ENCODE measurements at regions of chr7 and their contacts with region 1.

Region 1: GRCh38 chr7:143008007-143008901 is 18.7 kb downstream of the OR9A2 start:
- DNase-seq: peak; percentile 57 to 85 (median 75)
- ATAC-seq: peak; percentile 98
- H3K4me3 ChIP-seq: no peak overlapping the region
- H3K4me3 Mint-ChIP-seq: no peak overlapping the region
- H3K27ac ChIP-seq: no peak overlapping the region
- H3K27ac Mint-ChIP-seq: peak overlapping the region in 1 of 9 donors; percentile 56
- H3K4me1 ChIP-seq: no peaks in the 10 kb centered on the region
- H3K4me1 Mint-ChIP-seq: peaks cover 3 to 8% (median 5%) of the 10 kb centered on the region in 7 donors
- H3K27me3 ChIP-seq: no peaks in the 10 kb centered on the region
- H3K27me3 Mint-ChIP-seq: peaks cover 0 to 24% (median 4%) of the 10 kb centered on the region in 5 donors

Region 2: DNA sequence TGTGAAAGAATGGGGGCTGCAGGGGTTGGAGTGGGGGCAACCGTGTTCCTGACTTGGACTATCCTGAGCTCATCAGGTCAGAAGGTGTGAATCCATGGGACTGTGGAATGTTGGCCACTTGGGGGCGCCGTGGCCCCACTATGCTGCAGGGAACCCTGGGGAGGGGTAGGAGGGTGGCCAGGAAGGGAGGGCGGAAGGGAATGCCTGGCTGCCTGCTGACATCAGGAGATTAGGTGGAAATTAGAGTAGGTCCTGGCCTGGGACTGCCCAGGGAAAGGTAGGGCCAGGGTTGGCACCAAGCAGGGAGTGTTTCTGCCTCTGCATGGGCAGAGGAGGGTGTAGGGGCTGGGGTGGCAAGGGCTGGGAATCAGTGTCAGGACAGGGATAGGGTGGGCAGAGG is 684.5 kb before region 1 on chr7:
- CTCF ChIA-PET with region 1: interaction called, 3 read pairs
- POLR2A ChIA-PET with region 1: no interaction called
- intact Hi-C with region 1: loop called in 1 of 2 experiments (anchors 1 kb)
- DNase-seq: peak in 5 of 9 donors; percentile 25 to 44 (median 41)
- ATAC-seq: peak; percentile 40
- H3K4me3 ChIP-seq: no peak overlapping the region
- H3K4me3 Mint-ChIP-seq: peak overlapping the region in 7 of 10 donors; percentile 4 to 65 (median 54)
- H3K27ac ChIP-seq: peak overlapping the region; percentile 34
- H3K27ac Mint-ChIP-seq: peak overlapping the region; percentile 17 to 96 (median 80)
- H3K4me1 ChIP-seq: peaks cover 0 to 24% of the 10 kb centered on the region in 2 donors
- H3K4me1 Mint-ChIP-seq: peaks cover 5 to 51% (median 34%) of the 10 kb centered on the region in 7 donors
- H3K27me3 ChIP-seq: no peaks in the 10 kb centered on the region
- H3K27me3 Mint-ChIP-seq: peaks cover 0 to 23% (median 4%) of the 10 kb centered on the region in 5 donors

Region 3: GRCh38 chr7:142412551-142413193 is 595.6 kb before region 1 on chr7:
- CTCF ChIA-PET with region 1: no interaction called
- POLR2A ChIA-PET with region 1: no interaction called
- intact Hi-C with region 1: loop called in 1 of 2 experiments (anchors 10 kb)
- DNase-seq: peak in 8 of 9 donors; percentile 19 to 58 (median 38)
- ATAC-seq: peak; percentile 88
- H3K4me3 ChIP-seq: no peak overlapping the region
- H3K4me3 Mint-ChIP-seq: peak overlapping the region in 6 of 10 donors; percentile 8 to 56 (median 26)
- H3K27ac ChIP-seq: no peak overlapping the region
- H3K27ac Mint-ChIP-seq: peak overlapping the region in 3 of 9 donors; percentile 3 to 69 (median 6)
- H3K4me1 ChIP-seq: peaks cover 0 to 3% of the 10 kb centered on the region in 2 donors
- H3K4me1 Mint-ChIP-seq: peaks cover 4 to 7% (median 6%) of the 10 kb centered on the region in 7 donors
- H3K27me3 ChIP-seq: no peaks in the 10 kb centered on the region
- H3K27me3 Mint-ChIP-seq: peaks cover 0 to 19% (median 0%) of the 10 kb centered on the region in 5 donors

Region 4: GRCh38 chr7:142603870-142604448 is 404.3 kb before region 1 on chr7:
- CTCF ChIA-PET with region 1: interaction called, 11 read pairs
- POLR2A ChIA-PET with region 1: no interaction called
- intact Hi-C with region 1: loop called (anchors 1 kb)
- DNase-seq: peak in 8 of 9 donors; percentile 34 to 67 (median 56)
- ATAC-seq: peak; percentile 82
- H3K4me3 ChIP-seq: no peak overlapping the region
- H3K4me3 Mint-ChIP-seq: peak overlapping the region in 9 of 10 donors; percentile 38 to 66 (median 55)
- H3K27ac ChIP-seq: no peak overlapping the region
- H3K27ac Mint-ChIP-seq: peak overlapping the region in 6 of 9 donors; percentile 3 to 90 (median 58)
- H3K4me1 ChIP-seq: no peaks in the 10 kb centered on the region
- H3K4me1 Mint-ChIP-seq: peaks cover 0 to 18% (median 12%) of the 10 kb centered on the region in 7 donors
- H3K27me3 ChIP-seq: no peaks in the 10 kb centered on the region
- H3K27me3 Mint-ChIP-seq: peaks cover 0 to 19% (median 0%) of the 10 kb centered on the region in 5 donors

Region 5: DNA sequence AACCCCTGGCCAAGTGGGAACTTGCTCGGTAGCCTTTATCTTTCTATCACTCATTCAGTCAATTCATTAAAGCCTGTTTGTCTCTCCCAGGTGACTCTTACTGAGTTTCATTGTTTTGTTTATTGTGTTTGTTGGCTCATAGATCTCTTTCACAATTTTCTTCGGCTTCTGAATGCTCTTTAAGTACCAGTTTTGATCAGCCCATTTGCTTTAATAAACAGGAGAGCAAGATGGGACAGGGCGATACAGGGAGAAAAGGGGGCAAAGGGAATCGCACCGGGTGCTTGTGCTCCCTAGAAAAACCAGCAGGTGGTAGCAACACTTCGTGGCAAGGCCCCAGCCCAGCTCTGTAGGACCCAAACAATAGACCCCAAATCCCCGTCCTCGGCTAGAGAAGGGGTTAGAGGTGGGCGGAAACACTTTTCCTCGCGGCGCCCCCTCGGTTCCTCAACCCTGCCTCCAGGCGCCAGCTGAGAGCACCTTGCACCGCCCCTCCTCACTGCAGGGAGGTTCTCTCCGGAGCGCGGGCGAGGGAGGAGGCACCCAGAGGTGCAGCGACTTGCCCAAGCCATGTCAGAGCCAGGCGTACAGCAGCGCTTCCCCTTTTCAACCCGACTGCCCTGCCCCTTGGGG is 154.4 kb before region 1 on chr7:
- CTCF ChIA-PET with region 1: interaction called, 17 read pairs
- POLR2A ChIA-PET with region 1: no interaction called
- intact Hi-C with region 1: loop called (anchors 1 kb)
- DNase-seq: peak; percentile 56 to 74 (median 68)
- ATAC-seq: peak; percentile 88
- H3K4me3 ChIP-seq: peak overlapping the region; percentile 85
- H3K4me3 Mint-ChIP-seq: peak overlapping the region; percentile 90 to 99 (median 97)
- H3K27ac ChIP-seq: peak overlapping the region; percentile 69
- H3K27ac Mint-ChIP-seq: peak overlapping the region; percentile 37 to 92 (median 89)
- H3K4me1 ChIP-seq: peaks cover 4 to 12% of the 10 kb centered on the region in 2 donors
- H3K4me1 Mint-ChIP-seq: peaks cover 17 to 61% (median 39%) of the 10 kb centered on the region in 7 donors
- H3K27me3 ChIP-seq: no peaks in the 10 kb centered on the region
- H3K27me3 Mint-ChIP-seq: peaks cover 0 to 30% (median 0%) of the 10 kb centered on the region in 5 donors

Region 6: DNA sequence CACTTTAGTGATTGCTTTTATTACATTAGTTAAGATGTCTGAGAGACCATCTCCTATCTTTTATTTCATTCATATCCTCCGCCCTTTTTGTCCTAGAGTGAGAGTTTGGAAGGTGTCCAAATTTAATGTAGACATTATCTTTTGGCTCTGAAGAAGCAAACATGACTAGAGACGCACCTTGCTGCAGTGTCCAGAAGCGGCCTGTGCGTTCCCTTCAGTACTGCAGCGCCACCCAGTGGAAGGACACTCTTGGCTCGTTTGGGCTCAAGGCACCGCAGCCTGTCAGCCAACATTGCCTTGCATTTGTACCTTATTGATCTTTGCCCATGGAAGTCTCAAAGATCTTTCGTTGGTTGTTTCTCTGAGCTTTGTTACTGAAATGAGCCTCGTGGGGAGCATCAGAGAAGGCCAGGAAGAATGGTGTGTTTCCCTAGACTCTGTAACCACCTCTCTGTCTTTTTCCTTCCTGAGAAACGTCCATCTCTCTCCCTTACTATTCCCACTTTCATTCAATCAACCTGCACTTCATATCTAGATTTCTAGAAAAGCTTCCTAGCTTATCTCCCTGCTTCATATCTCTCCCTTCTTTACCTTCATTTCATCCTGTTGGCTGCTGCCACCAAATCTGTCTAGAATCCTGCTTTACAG is 297.3 kb after region 1 on chr7:
- CTCF ChIA-PET with region 1: interaction called, 3 read pairs
- POLR2A ChIA-PET with region 1: no interaction called
- intact Hi-C with region 1: loop called in 1 of 2 experiments (anchors 5 kb)
- DNase-seq: peak; percentile 32 to 62 (median 54)
- ATAC-seq: peak; percentile 87
- H3K4me3 ChIP-seq: no peak overlapping the region
- H3K4me3 Mint-ChIP-seq: peak overlapping the region in 1 of 10 donors; percentile 22
- H3K27ac ChIP-seq: no peak overlapping the region
- H3K27ac Mint-ChIP-seq: peak overlapping the region; percentile 4 to 85 (median 30)
- H3K4me1 ChIP-seq: peaks cover 0 to 2% of the 10 kb centered on the region in 2 donors
- H3K4me1 Mint-ChIP-seq: peaks cover 20 to 72% (median 37%) of the 10 kb centered on the region in 7 donors
- H3K27me3 ChIP-seq: no peaks in the 10 kb centered on the region
- H3K27me3 Mint-ChIP-seq: no peaks in the 10 kb centered on the region

Measured in naive thymus-derived CD4-positive, alpha-beta T cell (primary cell).